CD8-positive, alpha-beta memory T cell (primary cell): ENCODE measurements at regions of chr12 and their contacts with region 1.

Region 1: GRCh38 chr12:122265931-122266771 is at the start of gene VPS33A:
- DNase-seq: peak; percentile 89 to 96 (median 90)
- H3K4me3 ChIP-seq: peak within 1 kb of the TSS; percentile 88
- H3K4me3 Mint-ChIP-seq: peak within 1 kb of the TSS; percentile 93 to 100 (median 99)
- H3K27ac ChIP-seq: peak within 1 kb of the TSS; percentile 93
- H3K27ac Mint-ChIP-seq: peak within 1 kb of the TSS; percentile 98 to 100 (median 99)
- H3K4me1 ChIP-seq: peaks cover 15% of the 10 kb centered on the region
- H3K4me1 Mint-ChIP-seq: peaks cover 18 to 53% (median 40%) of the 10 kb centered on the region in 3 donors
- H3K27me3 ChIP-seq: no peaks in the 10 kb centered on the region
- H3K27me3 Mint-ChIP-seq: peaks cover 0 to 8% of the 10 kb centered on the region in 2 donors
- total RNA-seq, gene VPS33A: 43.1 to 44.2 TPM

Region 2: GRCh38 chr12:121888478-121889266 is 377.5 kb before region 1 on chr12 and contains the start of gene PSMD9:
- CTCF ChIA-PET with region 1: no interaction called
- POLR2A ChIA-PET with region 1: interaction called, 10 read pairs
- DNase-seq: peak; percentile 97 to 98 (median 98)
- H3K4me3 ChIP-seq: peak within 1 kb of the TSS; percentile 74
- H3K4me3 Mint-ChIP-seq: peak within 1 kb of the TSS; percentile 92 to 99 (median 99)
- H3K27ac ChIP-seq: peak within 1 kb of the TSS; percentile 88
- H3K27ac Mint-ChIP-seq: peak within 1 kb of the TSS; percentile 93 to 99 (median 99)
- H3K4me1 ChIP-seq: peaks cover 22% of the 10 kb centered on the region
- H3K4me1 Mint-ChIP-seq: peaks cover 28 to 51% (median 48%) of the 10 kb centered on the region in 3 donors
- H3K27me3 ChIP-seq: no peaks in the 10 kb centered on the region
- H3K27me3 Mint-ChIP-seq: peaks cover 0 to 3% of the 10 kb centered on the region in 2 donors
- total RNA-seq, gene PSMD9: 83.7 to 89.9 TPM

Region 3: GRCh38 chr12:122225683-122226407 is 40.3 kb before region 1 on chr12 and contains the start of gene DIABLO:
- CTCF ChIA-PET with region 1: interaction called, 36 read pairs
- POLR2A ChIA-PET with region 1: interaction called, 33 read pairs
- DNase-seq: peak; percentile 100
- H3K4me3 ChIP-seq: peak within 1 kb of the TSS; percentile 86
- H3K4me3 Mint-ChIP-seq: peak within 1 kb of the TSS; percentile 86 to 96 (median 89)
- H3K27ac ChIP-seq: peak within 1 kb of the TSS; percentile 99
- H3K27ac Mint-ChIP-seq: peak within 1 kb of the TSS; percentile 91 to 98 (median 94)
- H3K4me1 ChIP-seq: peaks cover 40% of the 10 kb centered on the region
- H3K4me1 Mint-ChIP-seq: peaks cover 46 to 67% (median 51%) of the 10 kb centered on the region in 3 donors
- H3K27me3 ChIP-seq: no peaks in the 10 kb centered on the region
- H3K27me3 Mint-ChIP-seq: no peaks in the 10 kb centered on the region
- total RNA-seq, gene DIABLO: 63.4 to 64.2 TPM

Region 4: DNA sequence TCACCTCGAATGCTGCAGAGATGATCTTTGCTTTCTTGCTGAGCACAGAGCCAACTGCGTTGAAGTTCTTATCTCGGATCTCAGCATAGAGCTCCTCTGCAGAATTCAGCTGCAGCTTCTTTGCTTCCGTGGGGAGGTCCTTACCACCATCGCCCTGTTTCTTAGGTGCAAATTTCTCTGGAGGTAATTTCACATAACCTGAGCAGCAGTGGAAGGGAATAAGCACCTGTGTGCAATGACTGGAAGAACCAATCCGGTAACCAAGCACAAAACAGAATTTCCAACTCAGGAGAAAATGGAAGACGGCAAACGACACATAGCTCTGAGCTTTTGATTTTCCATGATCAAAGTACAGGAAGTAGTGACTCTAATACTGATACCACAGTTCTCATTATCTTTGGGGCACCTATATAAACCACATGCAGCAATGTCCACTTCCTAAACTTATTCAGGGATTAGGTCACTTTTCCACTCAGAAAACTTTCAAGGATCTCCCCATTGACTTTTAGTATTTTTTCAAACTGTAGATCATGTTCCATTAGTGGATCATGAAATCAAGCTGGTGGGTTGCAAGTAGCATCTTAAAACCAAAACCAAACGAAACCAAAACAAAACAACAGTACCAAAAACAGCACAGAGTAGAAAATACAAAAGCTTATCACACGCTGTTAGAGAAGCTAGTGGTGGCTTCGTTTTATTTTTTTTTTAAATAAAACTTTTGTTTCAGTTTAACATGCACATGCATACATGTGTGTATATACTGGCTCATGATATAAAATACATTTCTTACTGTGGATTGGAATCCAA is 21.4 kb before region 1 on chr12:
- CTCF ChIA-PET with region 1: interaction called, 14 read pairs
- POLR2A ChIA-PET with region 1: interaction called, 30 read pairs
- DNase-seq: peak in 2 of 5 donors; percentile 5 to 64
- H3K4me3 ChIP-seq: peak overlapping the region; percentile 56
- H3K4me3 Mint-ChIP-seq: peak overlapping the region; percentile 82 to 92 (median 88)
- H3K27ac ChIP-seq: peak overlapping the region; percentile 45
- H3K27ac Mint-ChIP-seq: peak overlapping the region; percentile 84 to 98 (median 94)
- H3K4me1 ChIP-seq: peaks cover 35% of the 10 kb centered on the region
- H3K4me1 Mint-ChIP-seq: peaks cover 33 to 52% (median 51%) of the 10 kb centered on the region in 3 donors
- H3K27me3 ChIP-seq: no peaks in the 10 kb centered on the region
- H3K27me3 Mint-ChIP-seq: no peaks in the 10 kb centered on the region

Region 5: DNA sequence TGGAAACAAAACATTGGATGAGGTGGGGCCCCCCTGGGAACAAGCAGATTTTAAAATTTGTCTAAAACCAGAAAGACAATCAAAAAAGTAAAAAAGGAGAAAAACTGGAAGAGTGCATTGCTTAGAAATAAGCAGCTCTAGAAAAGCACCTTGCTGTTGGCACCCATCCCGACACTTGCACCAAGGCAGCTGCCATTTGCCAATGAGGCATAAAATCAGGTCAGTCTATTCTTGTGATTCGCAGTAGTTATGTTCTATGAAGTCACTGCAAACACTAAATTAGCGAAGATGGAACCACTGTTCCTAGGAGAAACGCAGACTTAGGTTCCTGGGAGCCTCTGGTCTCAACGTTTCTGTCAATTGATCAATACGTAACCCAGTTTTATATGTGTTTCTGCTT is 16.1 kb before region 1 on chr12:
- CTCF ChIA-PET with region 1: interaction called, 14 read pairs
- POLR2A ChIA-PET with region 1: interaction called, 30 read pairs
- DNase-seq: no peak
- H3K4me3 ChIP-seq: no peak overlapping the region
- H3K4me3 Mint-ChIP-seq: no peak overlapping the region
- H3K27ac ChIP-seq: no peak overlapping the region
- H3K27ac Mint-ChIP-seq: peak overlapping the region in 4 of 8 donors; percentile 3 to 70 (median 32)
- H3K4me1 ChIP-seq: peaks cover 10% of the 10 kb centered on the region
- H3K4me1 Mint-ChIP-seq: peaks cover 14 to 25% (median 15%) of the 10 kb centered on the region in 3 donors
- H3K27me3 ChIP-seq: no peaks in the 10 kb centered on the region
- H3K27me3 Mint-ChIP-seq: no peaks in the 10 kb centered on the region